ENCODE measurements at regions of chr14 and their contacts with region 1.

Region 1: GRCh38 chr14:39432179-39432618 is at the start of gene FBXO33:
- DNase-seq: peak; percentile 94 to 100 (median 97)

Region 2: DNA sequence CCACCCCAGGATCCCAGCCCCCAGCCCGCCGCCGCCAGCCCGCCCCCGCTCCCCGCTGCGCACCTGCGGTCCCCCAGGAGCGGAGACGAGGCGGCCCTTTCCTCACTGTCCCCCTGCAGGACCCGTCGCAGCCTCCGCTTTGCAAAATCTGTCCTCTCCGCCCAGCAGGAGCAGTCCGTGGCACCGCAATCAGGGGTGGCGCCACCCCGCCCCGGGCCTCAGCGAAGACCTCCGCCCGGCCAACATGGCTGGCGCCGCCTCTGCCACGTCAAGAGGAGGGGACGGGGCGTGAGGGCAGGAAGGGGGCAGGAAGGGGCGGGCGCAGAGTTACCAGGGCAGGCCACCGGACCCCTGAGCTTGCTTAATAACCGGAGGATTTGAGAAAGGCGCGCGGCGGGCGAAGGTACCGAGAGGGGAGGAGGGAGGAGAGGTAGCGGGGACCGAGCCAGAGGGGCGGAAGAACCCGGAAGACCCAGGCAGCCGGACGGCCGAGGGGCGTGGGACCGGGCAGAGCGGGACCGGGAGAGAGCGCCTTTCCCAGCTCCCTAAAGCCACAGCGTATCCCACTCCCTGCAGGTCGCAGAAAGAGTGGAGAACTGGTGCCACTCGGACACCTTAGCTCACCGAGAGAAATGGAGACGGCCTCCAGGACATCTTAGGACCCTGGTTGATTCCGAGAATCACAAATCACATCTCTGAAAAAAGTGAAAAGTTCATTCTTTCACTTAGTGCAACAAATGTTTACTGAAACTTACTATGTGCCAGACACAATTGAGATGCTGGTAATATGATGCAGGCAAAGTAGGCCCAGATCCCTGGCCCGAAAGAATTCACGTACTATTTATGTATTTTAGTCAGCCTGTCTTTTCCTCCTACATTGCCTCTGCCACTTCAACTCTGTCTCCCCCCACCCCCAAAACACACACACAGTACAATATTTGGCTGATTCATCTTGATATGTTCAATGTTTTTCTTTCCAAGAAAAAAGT is 328.9 kb before region 1 on chr14 and contains the start of gene SEC23A:
- intact Hi-C with region 1: loop called (anchors 5 kb)
- DNase-seq: peak; percentile 69 to 96 (median 80)

Region 3: GRCh38 chr14:39174560-39175444 is 257.4 kb before region 1 on chr14 and contains the start of gene PNN:
- intact Hi-C with region 1: loop called (anchors 5 kb)
- DNase-seq: peak; percentile 96 to 100 (median 98)

Region 4: DNA sequence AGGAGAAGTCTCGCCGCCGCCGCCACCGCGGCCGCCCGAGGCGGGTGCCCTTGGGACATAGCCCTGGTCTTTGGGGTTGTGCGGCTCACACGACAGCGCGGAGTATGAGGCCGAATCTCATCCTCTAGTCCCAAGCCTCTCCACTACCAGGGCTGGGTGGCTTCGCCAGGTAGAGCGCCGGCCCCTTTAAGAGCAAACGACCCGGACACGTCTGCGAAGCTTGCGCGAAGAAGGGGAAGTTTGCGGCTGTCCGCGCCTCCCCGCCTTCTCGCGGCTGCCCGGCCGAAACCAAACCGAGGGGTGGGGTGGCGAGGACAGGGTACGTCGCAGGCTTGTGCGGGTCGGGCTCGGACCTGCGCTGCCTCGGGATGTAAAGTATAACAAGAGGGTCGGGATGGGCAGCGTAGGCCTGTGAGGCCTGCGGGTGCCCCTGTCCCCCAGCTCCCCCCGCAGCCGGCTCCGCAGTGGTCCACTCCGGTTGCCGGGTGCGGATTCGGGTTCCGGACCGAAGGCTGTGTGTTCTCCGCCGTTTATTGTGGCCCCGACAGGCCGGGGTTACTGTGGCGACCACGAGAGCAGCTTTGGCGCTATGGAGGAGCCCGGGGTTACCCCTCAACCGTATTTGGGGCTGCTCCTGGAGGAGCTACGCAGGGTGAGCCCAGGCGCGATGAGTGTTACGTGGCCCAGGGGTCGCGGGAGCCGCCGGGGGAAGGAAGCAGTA is 165.2 kb before region 1 on chr14:
- intact Hi-C with region 1: loop called (anchors 5 kb)
- DNase-seq: peak; percentile 65 to 95 (median 80)

Region 5: DNA sequence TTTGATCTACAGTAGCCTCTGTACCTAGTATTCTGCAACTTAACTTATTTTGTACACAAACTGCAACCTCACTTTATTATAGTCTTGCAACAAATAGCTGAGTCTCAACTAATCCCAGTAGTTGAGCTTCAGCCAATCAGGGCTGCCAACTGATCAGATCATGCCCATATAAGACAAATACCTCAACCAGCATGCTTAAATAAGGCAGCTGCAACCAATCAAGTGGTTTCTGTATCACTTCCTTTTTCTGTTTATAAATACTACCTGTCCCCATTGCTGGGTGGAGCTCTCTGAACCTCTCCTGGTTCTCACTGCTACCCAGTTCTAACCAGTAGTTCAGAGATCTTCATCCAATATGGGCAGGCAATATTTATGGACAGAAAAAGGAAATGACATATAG is 248.6 kb after region 1 on chr14:
- intact Hi-C with region 1: no loop called
- DNase-seq: no peak

Measured in posterior cingulate gyrus (tissue), 11 donors.